Endothelial cell of umbilical vein (primary cell): ENCODE measurements at regions of chr16 and their contacts with region 1.

Region 1: DNA sequence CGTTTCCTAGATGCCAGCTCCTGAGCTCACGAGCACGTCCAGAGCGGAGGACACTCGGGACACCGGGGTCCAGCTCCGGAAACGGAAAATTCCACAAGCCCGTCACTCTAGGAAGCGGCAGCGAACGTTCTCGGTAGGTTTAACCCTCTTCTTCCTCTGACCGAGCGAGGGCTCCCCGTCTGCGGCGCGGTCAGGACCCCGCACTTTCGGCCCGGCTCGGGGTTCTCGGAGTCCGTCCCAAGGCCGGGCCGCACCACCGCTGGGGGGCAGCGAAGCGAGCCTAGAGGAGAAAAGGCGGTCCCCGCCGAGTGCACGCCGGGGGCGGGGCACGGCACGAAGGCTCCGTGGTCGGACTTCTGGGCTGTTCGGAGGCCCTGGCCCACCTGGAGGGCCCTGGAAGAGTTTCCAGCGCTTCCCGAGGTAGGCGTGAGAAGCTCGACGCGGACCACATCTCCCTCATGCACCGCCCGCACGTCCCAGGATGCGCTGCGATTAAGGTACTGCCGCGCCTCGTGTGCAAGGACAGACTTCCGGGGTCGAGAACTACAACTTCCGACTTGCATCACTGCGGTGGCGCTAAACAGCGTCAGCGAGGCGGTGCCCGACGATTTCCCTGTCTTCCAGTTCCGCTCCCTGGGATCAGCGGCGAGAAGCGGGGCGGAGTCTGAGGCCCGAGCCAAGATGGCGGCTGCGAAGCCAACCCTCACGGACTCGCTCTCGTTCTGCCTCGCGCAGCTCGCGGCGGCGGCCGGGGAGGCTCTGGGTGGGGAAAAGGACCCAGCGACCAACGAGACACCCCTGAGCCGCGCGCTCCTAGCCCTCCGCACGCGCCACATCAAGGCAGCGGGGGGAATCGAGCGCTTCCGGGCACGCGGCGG is at the start of gene ARMC5:
- DNase-seq: peak; percentile 96
- H3K4me3 ChIP-seq: peak within 1 kb of the TSS; percentile 41 to 81 (median 71)
- H3K27ac ChIP-seq: peak within 1 kb of the TSS; percentile 96
- H3K4me1 ChIP-seq: peaks cover 23% of the 10 kb centered on the region
- H3K27me3 ChIP-seq: no peaks in the 10 kb centered on the region
- CTCF ChIP-seq: peak; percentile 47 to 70
- POLR2A ChIP-seq: peak; percentile 38
- total RNA-seq, gene ARMC5: 17.3 and 17.9 TPM in 2 replicates

Region 2: GRCh38 chr16:31032736-31033708 is 426.1 kb before region 1 on chr16 and contains the start of gene STX4:
- CTCF ChIA-PET with region 1: no interaction called
- POLR2A ChIA-PET with region 1: no interaction called
- dilution Hi-C with region 1: no loop called
- intact Hi-C with region 1: loop called (anchors 1 kb)
- DNase-seq: peak; percentile 94
- H3K4me3 ChIP-seq: peak within 1 kb of the TSS; percentile 63 to 75 (median 71)
- H3K27ac ChIP-seq: peak within 1 kb of the TSS; percentile 85
- H3K4me1 ChIP-seq: peaks cover 11% of the 10 kb centered on the region
- H3K27me3 ChIP-seq: no peaks in the 10 kb centered on the region
- CTCF ChIP-seq: no peak
- POLR2A ChIP-seq: no peak
- total RNA-seq, gene STX4: 60.7 and 65.2 TPM in 2 replicates

Region 3: GRCh38 chr16:31179747-31180459 is 279.2 kb before region 1 on chr16 and contains the start of gene FUS:
- CTCF ChIA-PET with region 1: interaction called, 5 read pairs
- POLR2A ChIA-PET with region 1: interaction called, 5 read pairs
- dilution Hi-C with region 1: no loop called
- intact Hi-C with region 1: loop called (anchors 5 kb)
- DNase-seq: peak; percentile 90
- H3K4me3 ChIP-seq: peak within 1 kb of the TSS; percentile 77 to 100 (median 95)
- H3K27ac ChIP-seq: peak within 1 kb of the TSS; percentile 91
- H3K4me1 ChIP-seq: peaks cover 22% of the 10 kb centered on the region
- H3K27me3 ChIP-seq: no peaks in the 10 kb centered on the region
- CTCF ChIP-seq: no peak
- POLR2A ChIP-seq: peak; percentile 100
- total RNA-seq, gene FUS: 569 and 574 TPM in 2 replicates

Region 4: DNA sequence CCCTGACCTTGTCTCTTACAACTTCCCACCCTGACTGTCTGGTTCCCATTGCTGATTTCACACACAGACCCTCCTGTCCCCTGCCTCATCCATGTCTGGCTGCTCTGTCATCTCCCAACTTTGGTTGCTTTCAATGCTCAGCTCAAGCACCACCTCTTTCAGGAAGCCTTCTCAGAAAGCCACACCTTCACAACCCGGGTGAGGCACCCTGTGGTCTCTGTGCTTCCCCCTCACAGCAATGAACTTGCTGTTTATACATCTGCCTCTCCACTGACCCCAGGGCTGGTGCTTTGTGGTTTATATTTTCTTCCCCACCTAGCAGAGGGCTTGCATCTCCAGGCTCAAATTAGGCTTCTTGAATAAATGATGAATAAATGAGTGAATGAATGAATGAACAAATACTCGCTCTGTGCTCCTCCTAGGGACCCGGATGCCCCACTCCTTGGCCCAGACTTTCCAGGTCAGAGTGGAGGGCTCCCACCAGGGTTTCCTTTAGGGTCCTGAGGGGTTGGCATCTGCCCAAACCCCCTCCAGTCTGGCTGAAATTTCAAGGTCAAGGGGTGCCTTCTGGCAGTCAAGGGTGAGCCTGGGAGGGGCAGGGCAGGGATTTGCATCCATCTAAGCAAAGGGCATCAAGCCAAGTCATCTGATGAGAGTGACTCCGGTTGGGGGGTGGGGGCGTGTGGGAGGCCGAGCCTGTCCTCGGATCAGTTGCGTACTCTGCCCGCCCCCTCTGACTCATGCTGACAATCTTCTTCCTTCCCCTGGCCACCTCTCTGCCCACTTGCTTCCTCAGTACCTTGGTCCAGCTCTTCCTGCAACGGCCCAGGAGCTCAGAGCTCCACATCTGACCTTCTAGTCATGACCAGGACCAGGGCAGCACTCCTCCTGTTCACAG is 104.4 kb before region 1 on chr16 and contains the start of gene ITGAX:
- CTCF ChIA-PET with region 1: no interaction called
- POLR2A ChIA-PET with region 1: no interaction called
- dilution Hi-C with region 1: no loop called
- intact Hi-C with region 1: no loop called
- DNase-seq: peak; percentile 34
- H3K4me3 ChIP-seq: no peak within 1 kb of the TSS
- H3K27ac ChIP-seq: no peak within 1 kb of the TSS
- H3K4me1 ChIP-seq: peaks cover 4% of the 10 kb centered on the region
- H3K27me3 ChIP-seq: no peaks in the 10 kb centered on the region
- CTCF ChIP-seq: no peak
- POLR2A ChIP-seq: no peak
- total RNA-seq, gene ITGAX: 0.72 and 1.4 TPM in 2 replicates

Region 5: DNA sequence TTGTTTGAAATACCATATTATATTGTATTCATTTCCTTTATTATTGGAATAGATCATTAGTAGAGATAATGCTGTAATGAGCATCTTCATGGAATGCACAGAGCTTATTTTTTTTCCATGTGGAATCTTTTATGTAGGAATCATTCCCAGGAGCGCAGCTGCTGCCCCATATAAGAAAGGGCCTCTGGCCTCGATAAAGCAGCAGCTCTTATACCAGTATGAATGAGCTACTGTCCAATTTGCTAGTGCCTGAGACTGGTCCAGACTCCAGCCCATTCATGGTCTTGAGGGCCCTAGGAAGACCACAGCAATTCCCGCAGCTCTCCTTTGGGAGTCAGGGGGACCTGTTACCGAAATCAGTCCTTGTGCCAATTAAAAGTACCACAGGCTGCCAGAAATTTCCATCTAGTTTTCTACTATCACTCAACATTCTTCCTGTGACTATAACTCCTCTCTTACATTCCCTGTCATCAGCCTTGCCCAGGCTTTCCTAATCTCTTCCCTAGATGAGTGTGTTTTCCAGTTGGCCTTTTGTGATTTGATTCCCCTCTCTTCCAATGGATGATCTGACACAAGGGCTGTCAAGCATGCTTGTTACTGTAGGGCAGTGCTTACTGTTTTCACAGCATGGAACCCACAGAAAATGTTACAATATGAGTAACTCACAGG is 18.4 kb before region 1 on chr16:
- CTCF ChIA-PET with region 1: interaction called, 13 read pairs
- POLR2A ChIA-PET with region 1: interaction called, 4 read pairs
- dilution Hi-C with region 1: no loop called
- intact Hi-C with region 1: no loop called
- DNase-seq: no peak
- H3K4me3 ChIP-seq: no peak overlapping the region
- H3K27ac ChIP-seq: no peak overlapping the region
- H3K4me1 ChIP-seq: no peaks in the 10 kb centered on the region
- H3K27me3 ChIP-seq: peaks cover 3 to 11% of the 10 kb centered on the region in 2 experiments
- CTCF ChIP-seq: no peak
- POLR2A ChIP-seq: no peak

Region 6: GRCh38 chr16:31480851-31481536 is 21.9 kb after region 1 on chr16:
- CTCF ChIA-PET with region 1: interaction called, 13 read pairs
- POLR2A ChIA-PET with region 1: no interaction called
- dilution Hi-C with region 1: no loop called
- intact Hi-C with region 1: no loop called
- DNase-seq: peak; percentile 34
- H3K4me3 ChIP-seq: no peak overlapping the region
- H3K27ac ChIP-seq: no peak overlapping the region
- H3K4me1 ChIP-seq: peaks cover 10% of the 10 kb centered on the region
- H3K27me3 ChIP-seq: no peaks in the 10 kb centered on the region
- CTCF ChIP-seq: no peak
- POLR2A ChIP-seq: peak; percentile 21

Region 7: DNA sequence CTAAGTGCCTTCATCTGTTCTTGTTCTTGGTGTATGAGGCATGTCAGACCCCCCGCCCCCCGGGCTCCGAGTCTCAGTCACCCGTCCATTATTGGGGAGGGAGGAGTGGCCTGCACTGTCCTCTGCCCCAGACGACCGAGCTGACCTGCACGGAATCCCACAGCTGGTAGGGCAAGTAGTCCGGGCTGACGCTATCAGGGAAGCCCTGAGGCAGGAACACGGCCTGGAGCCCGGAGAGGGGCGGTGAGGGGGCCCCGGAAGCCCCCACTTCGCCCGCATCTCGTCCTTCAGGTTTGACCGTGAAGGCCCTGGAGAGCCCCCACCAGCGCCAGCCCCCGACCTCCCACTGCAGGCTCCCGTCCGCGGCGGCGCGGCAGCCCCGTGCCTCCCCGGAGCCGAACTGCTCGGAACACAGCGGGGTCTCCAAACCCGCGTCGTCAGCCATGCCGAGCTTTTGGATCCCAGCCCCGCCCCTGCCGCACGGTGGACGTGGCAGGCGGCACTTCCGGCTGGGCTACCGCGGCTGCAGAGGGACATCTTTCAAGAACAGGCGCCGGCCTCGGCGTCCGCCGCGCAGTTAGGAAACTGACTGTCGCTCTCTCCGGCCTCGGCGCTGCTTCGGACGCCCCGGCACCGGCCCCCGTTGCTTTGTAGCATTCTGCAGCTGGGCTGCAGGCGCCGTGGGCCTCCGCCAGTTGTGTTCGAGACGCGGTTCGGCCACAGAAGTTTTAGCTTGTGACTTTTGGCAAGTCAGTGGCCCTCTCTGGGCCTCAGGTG is 49.0 kb after region 1 on chr16 and contains the start of gene RUSF1:
- CTCF ChIA-PET with region 1: interaction called, 5 read pairs
- POLR2A ChIA-PET with region 1: no interaction called
- dilution Hi-C with region 1: no loop called
- intact Hi-C with region 1: loop called (anchors 1 kb)
- DNase-seq: peak; percentile 89
- H3K4me3 ChIP-seq: peak within 1 kb of the TSS; percentile 69 to 90 (median 77)
- H3K27ac ChIP-seq: peak within 1 kb of the TSS; percentile 82
- H3K4me1 ChIP-seq: peaks cover 27% of the 10 kb centered on the region
- H3K27me3 ChIP-seq: no peaks in the 10 kb centered on the region
- CTCF ChIP-seq: no peak
- POLR2A ChIP-seq: peak; percentile 91
- total RNA-seq, gene RUSF1: 36.4 and 36.8 TPM in 2 replicates

Region 8: DNA sequence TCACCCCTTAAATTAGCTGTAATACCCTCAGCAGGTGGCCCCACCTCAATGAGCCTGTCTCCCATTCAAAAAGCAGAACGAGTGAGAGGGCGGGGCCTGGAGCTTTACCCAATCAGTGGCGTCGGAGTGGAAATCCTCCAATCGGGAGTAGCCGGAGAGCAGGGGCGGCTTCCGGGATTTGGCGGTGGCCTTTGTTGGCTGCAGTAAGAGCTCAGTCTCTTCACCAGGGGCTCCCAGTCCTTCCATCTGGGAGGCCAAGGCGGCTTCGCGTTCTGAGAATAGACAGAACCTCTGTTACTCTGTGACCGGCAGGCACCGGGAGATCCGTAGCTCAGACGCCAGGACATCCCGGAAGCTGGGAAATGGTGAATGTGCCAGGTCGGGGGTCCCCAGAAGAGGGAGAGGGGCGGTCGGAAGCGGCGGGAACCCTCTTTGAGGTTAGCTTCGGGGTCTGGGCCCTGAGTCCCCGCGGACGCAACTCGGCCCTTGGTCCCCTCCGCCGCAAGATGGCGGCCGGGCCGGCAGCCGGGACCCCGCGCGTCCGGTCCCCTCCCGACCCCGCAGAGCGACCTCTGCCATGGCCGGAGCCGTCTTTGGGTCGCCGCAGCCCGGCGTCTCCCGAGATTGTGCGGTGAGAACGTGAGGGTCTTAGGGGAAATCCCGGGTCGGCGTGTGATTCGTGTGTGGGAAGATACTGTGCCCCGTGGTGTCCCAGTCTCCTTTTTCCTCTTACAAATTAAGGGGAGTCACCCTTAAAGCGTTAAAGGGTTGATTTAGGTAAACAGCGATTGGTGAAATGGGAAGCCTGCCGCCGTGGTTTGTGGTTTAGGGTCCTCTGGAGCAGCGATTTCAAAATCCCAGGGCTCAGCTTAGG is 254.2 kb after region 1 on chr16:
- CTCF ChIA-PET with region 1: interaction called, 3 read pairs
- POLR2A ChIA-PET with region 1: interaction called, 10 read pairs
- dilution Hi-C with region 1: no loop called
- intact Hi-C with region 1: loop called (anchors 5 kb)
- DNase-seq: peak; percentile 94
- H3K4me3 ChIP-seq: peak overlapping the region; percentile 86 to 93 (median 92)
- H3K27ac ChIP-seq: peak overlapping the region; percentile 89
- H3K4me1 ChIP-seq: peaks cover 8% of the 10 kb centered on the region
- H3K27me3 ChIP-seq: no peaks in the 10 kb centered on the region
- CTCF ChIP-seq: no peak
- POLR2A ChIP-seq: peak; percentile 97